T-cell (primary cell): ENCODE measurements at regions of chr6 and their contacts with region 1.

Region 1: GRCh38 chr6:152223636-152224035 is 413.5 kb downstream of the SYNE1 start:
- DNase-seq: no peak
- ATAC-seq: no peak
- H3K4me3 ChIP-seq: no peak overlapping the region
- H3K4me3 Mint-ChIP-seq: no peak overlapping the region
- H3K27ac ChIP-seq: no peak overlapping the region
- H3K27ac Mint-ChIP-seq: peak overlapping the region in 1 of 2 donors; percentile 36
- H3K4me1 ChIP-seq: no peaks in the 10 kb centered on the region
- H3K4me1 Mint-ChIP-seq: no peaks in the 10 kb centered on the region
- H3K27me3 ChIP-seq: no peaks in the 10 kb centered on the region
- H3K27me3 Mint-ChIP-seq: no peaks in the 10 kb centered on the region

Region 2: DNA sequence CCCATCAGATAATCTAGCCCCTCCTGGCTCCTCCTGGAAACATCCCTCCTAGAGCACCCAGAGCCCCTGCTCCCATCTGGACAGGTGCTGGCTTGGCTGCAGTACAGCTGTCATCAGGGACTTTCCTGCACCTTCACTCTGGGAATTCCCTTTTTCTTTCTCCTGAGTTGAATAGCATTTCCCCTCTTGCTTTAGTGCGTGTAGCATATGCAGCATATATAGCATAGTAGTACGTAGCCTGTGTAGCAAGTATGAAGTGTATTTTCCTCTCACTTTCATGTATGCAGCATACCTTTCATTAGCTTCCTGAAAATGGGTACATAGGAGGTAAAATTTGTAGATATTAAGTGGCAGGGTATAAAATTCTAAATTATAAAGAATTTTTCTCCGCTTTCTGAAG is 63.3 kb before region 1 on chr6:
- CTCF ChIA-PET with region 1: no interaction called
- POLR2A ChIA-PET with region 1: interaction called in 1 of 2 experiments, 17 read pairs
- DNase-seq: peak in 1 of 35 experiments; percentile 46
- ATAC-seq: peak in 3 of 4 experiments; percentile 24 to 47 (median 40)
- H3K4me3 ChIP-seq: no peak overlapping the region
- H3K4me3 Mint-ChIP-seq: no peak overlapping the region
- H3K27ac ChIP-seq: no peak overlapping the region
- H3K27ac Mint-ChIP-seq: peak overlapping the region; percentile 52 to 57
- H3K4me1 ChIP-seq: peaks cover 0 to 4% of the 10 kb centered on the region in 2 experiments
- H3K4me1 Mint-ChIP-seq: peaks cover 11 to 25% (median 18%) of the 10 kb centered on the region in 3 donors
- H3K27me3 ChIP-seq: no peaks in the 10 kb centered on the region
- H3K27me3 Mint-ChIP-seq: no peaks in the 10 kb centered on the region

Region 3: GRCh38 chr6:152195896-152196295 is 27.7 kb before region 1 on chr6:
- CTCF ChIA-PET with region 1: no interaction called
- POLR2A ChIA-PET with region 1: no interaction called
- DNase-seq: no peak
- ATAC-seq: no peak
- H3K4me3 ChIP-seq: no peak overlapping the region
- H3K4me3 Mint-ChIP-seq: no peak overlapping the region
- H3K27ac ChIP-seq: no peak overlapping the region
- H3K27ac Mint-ChIP-seq: peak overlapping the region in 1 of 2 donors; percentile 66
- H3K4me1 ChIP-seq: no peaks in the 10 kb centered on the region
- H3K4me1 Mint-ChIP-seq: peaks cover 11 to 27% (median 23%) of the 10 kb centered on the region in 3 donors
- H3K27me3 ChIP-seq: no peaks in the 10 kb centered on the region
- H3K27me3 Mint-ChIP-seq: no peaks in the 10 kb centered on the region